ENCODE measurements at regions of chr10 and their contacts with region 1.

Region 1: DNA sequence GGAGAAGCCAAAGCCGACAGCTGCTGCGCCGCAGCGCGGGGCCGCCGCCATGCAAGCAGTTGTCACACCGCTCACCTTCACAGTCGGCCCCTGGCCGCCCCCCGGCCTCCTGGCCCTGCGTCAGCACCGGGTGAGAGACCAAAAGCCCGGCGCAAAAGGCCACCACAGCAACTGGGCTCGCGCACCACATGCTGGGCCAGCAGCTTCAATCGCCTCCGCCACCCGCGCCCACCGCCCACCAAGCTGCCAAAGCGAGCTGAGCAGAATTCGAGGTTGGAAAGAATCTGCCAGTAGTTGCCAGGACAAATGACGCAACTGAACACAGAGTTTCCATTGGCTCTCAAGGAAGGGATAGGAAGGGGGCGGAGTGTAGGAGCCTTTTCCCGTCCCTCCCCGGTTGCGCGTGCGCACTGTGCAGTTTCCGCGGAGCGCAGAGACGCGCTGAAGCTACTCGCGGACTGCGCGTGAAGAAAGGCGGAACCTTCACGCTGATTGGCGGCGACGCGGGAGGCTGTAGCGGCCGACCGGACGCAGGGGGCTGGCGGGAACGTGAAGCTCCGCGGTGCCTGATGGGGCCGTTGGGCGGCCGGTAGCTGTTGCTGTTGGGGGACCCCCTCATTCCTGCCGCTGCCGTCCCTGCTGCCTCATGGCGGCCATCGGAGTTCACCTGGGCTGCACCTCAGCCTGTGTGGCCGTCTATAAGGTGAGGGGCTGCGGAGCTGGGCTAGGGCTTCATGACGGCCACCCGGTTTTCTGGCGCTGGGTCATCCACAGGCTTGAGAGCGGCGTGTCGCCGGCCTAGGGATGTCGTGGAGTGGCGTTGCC is at the starts of genes CDNF, HSPA14 and MSANTD7:
- DNase-seq: peak; percentile 98
- ATAC-seq: peak; percentile 96
- H3K4me3 ChIP-seq: peak within 1 kb of the TSS; percentile 79 to 98 (median 93)
- H3K27ac ChIP-seq: peak within 1 kb of the TSS; percentile 83
- H3K4me1 ChIP-seq: peaks cover 17% of the 10 kb centered on the region
- H3K27me3 ChIP-seq: no peaks in the 10 kb centered on the region; a peak in 1 of 5 replicates
- CTCF ChIP-seq: 0 out of 2 replicates have a peak, but pooled peaks have one; percentile 13
- EP300 ChIP-seq: peak; percentile 18 to 19; a peak in 1 of 4 replicates
- POLR2A ChIP-seq: peak; percentile 76 to 83
- RAD21 ChIP-seq: peak; percentile 58
- total RNA-seq, gene CDNF: 0.33 and 0.38 TPM in 2 replicates
- total RNA-seq, gene HSPA14: 29.8 and 42.9 TPM in 2 replicates
- total RNA-seq, gene MSANTD7: 16.7 and 22.8 TPM in 2 replicates

Region 2: DNA sequence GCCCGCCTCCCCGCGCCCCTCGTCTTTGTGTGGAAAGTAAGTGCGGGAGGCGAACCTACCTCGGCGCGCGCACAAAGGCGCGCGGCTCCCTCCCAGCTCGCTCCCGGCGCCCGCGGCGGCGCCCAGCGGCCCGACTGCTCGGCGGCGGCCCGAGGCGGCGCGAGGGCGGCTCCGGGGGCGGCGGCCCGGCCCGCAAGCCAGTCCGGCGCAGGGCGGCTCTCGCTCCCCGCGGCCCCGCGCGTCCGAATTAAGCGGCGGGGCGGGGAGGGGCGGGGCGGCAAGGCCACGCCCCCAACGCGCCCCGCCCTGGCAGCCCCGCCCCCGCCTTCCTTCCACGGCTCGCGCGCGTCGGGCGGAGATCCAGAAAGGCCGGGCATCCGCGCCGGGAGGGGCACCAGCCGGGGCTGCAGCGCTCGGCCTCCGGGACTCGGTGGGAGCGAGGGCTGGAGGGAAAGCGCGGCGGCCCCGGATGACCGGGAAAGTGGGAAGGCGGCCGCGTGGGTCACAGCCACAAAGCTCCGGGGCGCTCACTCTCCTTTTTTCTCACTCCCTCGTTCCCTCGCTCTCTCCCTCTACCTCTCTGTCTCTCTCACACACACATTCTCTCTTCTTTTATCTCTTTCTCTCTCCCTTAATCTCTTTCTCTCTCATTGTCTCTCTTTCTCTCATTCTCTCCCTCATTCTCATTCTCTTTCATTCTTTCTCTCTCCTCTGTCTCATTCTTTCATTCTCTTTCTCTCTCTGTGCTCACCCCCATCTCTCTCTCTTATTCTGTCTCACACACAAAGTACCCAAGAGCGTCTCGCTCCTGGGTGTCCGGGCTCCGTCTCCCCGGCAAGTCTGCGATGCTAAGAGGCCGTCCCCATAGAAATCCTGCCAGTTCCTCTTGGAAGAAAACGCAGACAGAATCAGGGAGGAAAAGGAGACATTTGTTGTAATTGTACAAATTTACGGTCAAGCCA is 233.5 kb before region 1 on chr10:
- CTCF ChIA-PET with region 1: no interaction called
- POLR2A ChIA-PET with region 1: no interaction called
- in situ Hi-C with region 1: no loop called
- intact Hi-C with region 1: loop called (anchors 5 kb)
- DNase-seq: no peak
- ATAC-seq: peak; percentile 79
- H3K4me3 ChIP-seq: peak overlapping the region; percentile 38 to 91 (median 74); a peak in 5 of 6 replicates
- H3K27ac ChIP-seq: no peak overlapping the region
- H3K4me1 ChIP-seq: peaks cover 71% of the 10 kb centered on the region
- H3K27me3 ChIP-seq: no peaks in the 10 kb centered on the region
- CTCF ChIP-seq: no peak
- EP300 ChIP-seq: no peak
- POLR2A ChIP-seq: peak in 1 of 2 experiments; percentile 73; a peak in 2 of 4 replicates
- RAD21 ChIP-seq: no peak

Region 3: DNA sequence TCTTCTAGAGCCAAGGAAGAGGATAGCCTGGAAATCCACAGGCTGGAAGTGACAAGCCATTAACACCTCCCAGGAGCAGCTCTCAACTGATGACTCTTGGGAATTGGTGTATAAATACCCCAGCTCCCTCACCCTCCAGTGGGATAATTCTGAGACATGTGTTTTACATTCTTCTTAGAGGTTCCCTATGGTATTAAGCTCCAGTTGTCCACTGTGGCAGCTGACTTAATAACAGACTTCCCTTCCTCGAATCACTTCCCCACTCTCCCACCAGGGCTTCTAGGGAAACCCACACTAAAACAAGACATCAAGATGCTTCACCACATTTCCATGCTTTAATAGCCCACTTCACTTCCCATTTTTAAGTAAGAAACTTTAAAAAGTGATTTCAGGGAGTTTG is 110.5 kb before region 1 on chr10:
- CTCF ChIA-PET with region 1: no interaction called
- POLR2A ChIA-PET with region 1: no interaction called
- in situ Hi-C with region 1: no loop called
- intact Hi-C with region 1: no loop called
- DNase-seq: no peak
- ATAC-seq: no peak
- H3K4me3 ChIP-seq: no peak overlapping the region
- H3K27ac ChIP-seq: no peak overlapping the region
- H3K4me1 ChIP-seq: no peaks in the 10 kb centered on the region
- H3K27me3 ChIP-seq: peaks cover 0 to 5% of the 10 kb centered on the region in 2 experiments; a peak in 2 of 5 replicates
- CTCF ChIP-seq: no peak
- EP300 ChIP-seq: no peak
- POLR2A ChIP-seq: no peak
- RAD21 ChIP-seq: no peak

Region 4: DNA sequence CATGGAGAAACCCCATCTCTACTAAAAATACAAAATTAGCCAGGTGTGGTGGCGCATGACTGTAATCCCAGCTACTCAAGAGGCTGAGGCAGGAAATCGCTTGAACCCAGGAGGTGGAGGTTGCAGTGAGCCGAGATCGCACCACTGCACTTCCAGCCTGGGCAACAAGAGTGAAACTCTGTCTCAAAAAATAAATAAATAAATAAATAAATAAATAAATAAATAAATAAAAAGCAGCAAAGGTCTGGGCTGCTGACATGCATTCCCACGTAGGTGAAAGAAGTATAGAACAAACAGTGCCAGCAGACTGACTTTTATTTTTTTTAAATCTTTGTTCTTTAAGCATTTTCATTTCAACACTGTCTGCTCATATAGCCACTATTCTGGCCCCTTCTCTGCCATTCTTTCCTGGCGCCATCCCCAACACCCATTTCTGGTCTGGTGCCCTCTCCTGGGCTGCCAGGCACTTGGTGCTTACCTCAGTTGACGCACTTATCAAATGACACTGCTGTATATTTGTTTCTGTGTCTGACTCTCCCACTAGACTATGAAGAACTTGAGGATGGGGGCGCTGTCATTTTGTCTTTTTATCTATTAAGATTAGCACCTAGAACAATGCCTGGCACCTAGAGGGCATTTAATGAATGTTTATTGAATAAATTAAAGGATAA is 78.8 kb before region 1 on chr10:
- CTCF ChIA-PET with region 1: no interaction called
- POLR2A ChIA-PET with region 1: no interaction called
- in situ Hi-C with region 1: no loop called
- intact Hi-C with region 1: no loop called
- DNase-seq: no peak
- ATAC-seq: no peak
- H3K4me3 ChIP-seq: no peak overlapping the region
- H3K27ac ChIP-seq: no peak overlapping the region
- H3K4me1 ChIP-seq: no peaks in the 10 kb centered on the region
- H3K27me3 ChIP-seq: peaks cover 0 to 7% of the 10 kb centered on the region in 2 experiments; a peak in 1 of 5 replicates
- CTCF ChIP-seq: no peak
- EP300 ChIP-seq: no peak
- POLR2A ChIP-seq: no peak
- RAD21 ChIP-seq: no peak

Region 5: DNA sequence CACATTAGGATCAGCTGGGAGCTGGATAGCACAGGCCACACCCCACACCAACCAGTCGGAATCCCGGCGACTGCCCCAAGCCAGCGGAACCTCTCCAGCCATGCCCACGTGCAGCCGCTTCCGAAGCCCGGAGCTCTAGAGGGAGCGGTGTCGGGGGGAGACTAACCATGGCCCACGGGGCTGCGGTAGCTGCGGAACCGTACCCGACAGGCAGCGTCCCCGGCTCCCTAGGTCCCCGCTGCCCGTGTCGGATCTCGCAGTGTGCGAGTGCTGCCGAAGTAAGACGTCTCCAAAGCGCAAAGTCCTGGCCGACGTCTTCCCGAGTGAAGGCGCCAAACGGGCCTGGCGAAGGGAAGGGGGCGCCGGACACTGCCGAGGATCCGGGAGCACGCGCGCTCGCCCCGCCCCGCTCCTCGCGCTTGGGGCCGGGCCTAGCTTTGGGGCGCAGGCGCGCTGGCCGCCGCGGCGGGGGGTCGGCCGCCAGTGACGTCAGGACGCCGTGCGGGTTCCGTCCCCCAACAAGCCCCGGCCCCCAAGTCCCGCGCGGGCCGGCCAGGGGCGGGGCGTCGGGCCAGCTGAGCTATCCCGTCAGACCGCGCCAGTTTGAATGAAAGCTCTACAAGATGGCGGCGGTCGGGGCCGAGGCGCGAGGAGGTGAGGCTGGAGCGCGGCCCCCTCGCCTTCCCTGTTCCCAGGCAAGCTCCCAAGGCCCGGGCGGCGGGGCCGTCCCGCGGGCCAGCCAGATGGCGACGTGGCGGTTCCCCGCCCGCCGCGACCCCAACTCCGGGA is 40.5 kb after region 1 on chr10 and contains the start of gene SUV39H2:
- CTCF ChIA-PET with region 1: no interaction called
- POLR2A ChIA-PET with region 1: interaction called, 54 read pairs
- in situ Hi-C with region 1: no loop called
- intact Hi-C with region 1: loop called (anchors 1 kb)
- DNase-seq: peak; percentile 87
- ATAC-seq: peak; percentile 91
- H3K4me3 ChIP-seq: peak within 1 kb of the TSS; percentile 76 to 98 (median 91)
- H3K27ac ChIP-seq: peak within 1 kb of the TSS; percentile 97
- H3K4me1 ChIP-seq: peaks cover 38% of the 10 kb centered on the region
- H3K27me3 ChIP-seq: no peaks in the 10 kb centered on the region; a peak in 1 of 5 replicates
- CTCF ChIP-seq: peak; percentile 53
- EP300 ChIP-seq: no peak
- POLR2A ChIP-seq: peak; percentile 85 to 94
- RAD21 ChIP-seq: 0 out of 2 replicates have a peak, but pooled peaks have one; percentile 21
- total RNA-seq, gene SUV39H2: 44.3 and 68.8 TPM in 2 replicates